ENCODE measurements at regions of chr1 and their contacts with region 1.

Region 1: DNA sequence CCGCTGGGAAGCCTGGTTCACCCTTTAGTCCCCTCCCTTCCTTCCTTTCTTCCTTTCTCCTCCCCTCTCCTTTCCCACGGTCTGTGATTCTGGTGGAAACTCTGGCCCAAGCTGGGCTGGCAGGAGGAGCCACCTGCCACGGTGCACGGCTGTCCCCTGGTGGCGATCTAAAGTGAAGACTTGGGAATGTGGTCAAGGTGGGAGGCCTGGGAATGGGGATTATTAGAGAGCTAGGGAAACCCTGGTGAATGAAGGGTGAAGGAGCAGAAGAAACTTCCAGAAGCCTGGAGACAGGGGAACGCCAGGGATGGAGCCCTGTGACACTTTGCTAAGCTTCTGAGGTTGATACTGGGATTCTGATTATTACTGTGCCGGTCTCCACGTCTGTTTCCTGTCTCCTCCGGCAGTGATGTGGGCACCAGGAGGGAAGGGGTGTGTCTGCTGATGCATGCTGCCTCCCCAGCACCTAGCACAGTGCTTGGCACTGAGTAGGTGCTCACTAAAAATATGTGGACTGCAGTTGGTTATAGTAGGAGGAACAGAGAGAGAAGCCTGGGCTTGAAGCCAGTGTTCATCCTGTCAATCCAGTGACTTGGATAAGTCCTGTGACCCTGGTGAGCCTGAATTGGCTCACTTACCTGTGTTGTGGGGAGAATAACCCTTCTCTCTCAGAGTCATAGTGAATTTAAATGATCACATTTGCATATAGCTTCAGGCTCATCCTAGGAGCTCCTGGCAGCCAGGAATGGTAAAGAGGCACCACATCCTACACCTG is 71.2 kb upstream of the NBPF3 start:
- DNase-seq: peak; percentile 86 to 93
- ATAC-seq: peak; percentile 96
- H3K4me3 ChIP-seq: no peak overlapping the region
- H3K27ac ChIP-seq: no peak overlapping the region
- H3K4me1 ChIP-seq: no peaks in the 10 kb centered on the region
- H3K27me3 ChIP-seq: no peaks in the 10 kb centered on the region

Region 2: GRCh38 chr1:21216835-21217811 is 151.6 kb before region 1 on chr1:
- intact Hi-C with region 1: loop called in 1 of 2 experiments (anchors 5 kb)
- DNase-seq: peak; percentile 65 to 86
- ATAC-seq: peak; percentile 39
- H3K4me3 ChIP-seq: no peak overlapping the region
- H3K27ac ChIP-seq: no peak overlapping the region
- H3K4me1 ChIP-seq: no peaks in the 10 kb centered on the region
- H3K27me3 ChIP-seq: no peaks in the 10 kb centered on the region

Region 3: GRCh38 chr1:21232044-21232443 is 136.7 kb before region 1 on chr1:
- intact Hi-C with region 1: loop called (anchors 1 kb)
- DNase-seq: no peak
- ATAC-seq: peak; percentile 87
- H3K4me3 ChIP-seq: no peak overlapping the region
- H3K27ac ChIP-seq: no peak overlapping the region
- H3K4me1 ChIP-seq: no peaks in the 10 kb centered on the region
- H3K27me3 ChIP-seq: no peaks in the 10 kb centered on the region

Region 4: GRCh38 chr1:21255278-21255942 is 113.3 kb before region 1 on chr1:
- intact Hi-C with region 1: loop called (anchors 1 to 2 kb)
- DNase-seq: peak; percentile 94 to 97
- ATAC-seq: peak; percentile 88
- H3K4me3 ChIP-seq: no peak overlapping the region
- H3K27ac ChIP-seq: peak overlapping the region; percentile 58 to 66
- H3K4me1 ChIP-seq: no peaks in the 10 kb centered on the region
- H3K27me3 ChIP-seq: no peaks in the 10 kb centered on the region

Measured in aorta (tissue), 5 donors.